ENCODE measurements at regions of chr1 and their contacts with region 1.

Region 1: DNA sequence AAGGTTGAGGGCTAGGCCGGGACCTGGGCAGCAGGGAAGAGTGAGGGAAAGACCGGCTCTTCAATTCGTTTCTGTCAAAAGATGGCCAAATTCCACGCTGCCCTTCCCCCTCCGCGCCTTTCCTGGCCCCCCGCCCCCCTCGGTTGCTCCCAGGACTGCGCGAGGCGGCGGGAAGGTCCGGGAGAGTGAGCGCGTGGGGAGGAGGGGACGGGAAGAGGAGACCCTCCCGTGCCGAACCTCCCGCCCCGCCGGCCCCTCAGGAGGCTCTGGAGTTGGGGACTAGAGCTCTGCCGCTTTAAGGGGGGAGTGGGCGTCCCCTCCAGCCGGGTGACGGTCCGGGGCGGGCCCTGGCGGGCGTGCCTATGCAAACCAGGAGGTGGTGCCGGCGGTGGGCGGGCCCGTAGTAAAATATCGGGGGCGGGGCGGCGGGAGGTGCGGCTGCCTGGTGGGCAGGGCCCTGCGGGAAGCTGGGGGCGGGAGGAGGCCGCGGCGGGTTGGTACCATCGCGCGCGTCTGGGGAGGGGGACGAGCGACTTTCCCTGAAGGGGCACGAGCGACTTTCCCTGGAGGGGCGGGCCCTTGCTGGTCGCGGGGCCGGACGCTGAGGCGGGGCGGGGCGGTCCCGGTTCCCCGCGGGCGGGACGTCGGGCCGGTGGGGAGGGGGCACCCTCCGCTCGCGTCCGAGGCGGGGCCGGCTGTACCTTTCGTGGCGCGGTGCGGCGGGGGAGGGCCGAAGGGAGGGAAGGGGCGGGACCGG is 58.2 kb downstream of the BCL9 start:
- DNase-seq: peak; percentile 94
- H3K4me3 ChIP-seq: peak overlapping the region; percentile 74
- H3K27ac ChIP-seq: peak overlapping the region; percentile 25
- H3K4me1 ChIP-seq: peaks cover 23% of the 10 kb centered on the region
- CTCF ChIP-seq: no peak

Region 2: GRCh38 chr1:147302273-147302672 is 297.3 kb before region 1 on chr1:
- CTCF ChIA-PET with region 1: no interaction called
- POLR2A ChIA-PET with region 1: no interaction called
- intact Hi-C with region 1: no loop called
- DNase-seq: no peak
- H3K4me3 ChIP-seq: no peak overlapping the region
- H3K27ac ChIP-seq: no peak overlapping the region
- H3K4me1 ChIP-seq: no peaks in the 10 kb centered on the region
- CTCF ChIP-seq: no peak

Region 3: DNA sequence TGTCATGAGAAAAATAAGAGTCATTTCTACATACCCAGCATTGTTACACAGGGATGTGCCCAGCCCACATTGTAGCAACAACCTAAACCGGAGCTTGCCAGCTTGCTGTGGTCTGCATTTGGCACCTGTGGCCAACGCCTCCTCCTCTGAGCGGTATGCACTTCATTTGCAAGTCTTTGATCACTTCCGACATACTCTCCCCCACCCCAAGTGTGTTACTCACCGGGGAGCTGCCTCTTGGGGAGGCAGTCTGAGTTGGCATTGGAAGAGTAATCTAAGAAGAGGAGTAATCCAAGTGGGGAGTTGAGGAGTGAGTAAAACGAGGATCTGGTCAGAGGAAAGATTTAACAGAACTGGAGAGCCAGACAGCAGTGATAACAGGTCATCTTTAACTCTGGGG is 54.4 kb before region 1 on chr1:
- CTCF ChIA-PET with region 1: no interaction called
- POLR2A ChIA-PET with region 1: interaction called, 17 read pairs
- intact Hi-C with region 1: loop called (anchors 1 kb)
- DNase-seq: peak; percentile 90
- H3K4me3 ChIP-seq: peak overlapping the region; percentile 39
- H3K27ac ChIP-seq: peak overlapping the region; percentile 40
- H3K4me1 ChIP-seq: peaks cover 53% of the 10 kb centered on the region
- CTCF ChIP-seq: no peak

Region 4: DNA sequence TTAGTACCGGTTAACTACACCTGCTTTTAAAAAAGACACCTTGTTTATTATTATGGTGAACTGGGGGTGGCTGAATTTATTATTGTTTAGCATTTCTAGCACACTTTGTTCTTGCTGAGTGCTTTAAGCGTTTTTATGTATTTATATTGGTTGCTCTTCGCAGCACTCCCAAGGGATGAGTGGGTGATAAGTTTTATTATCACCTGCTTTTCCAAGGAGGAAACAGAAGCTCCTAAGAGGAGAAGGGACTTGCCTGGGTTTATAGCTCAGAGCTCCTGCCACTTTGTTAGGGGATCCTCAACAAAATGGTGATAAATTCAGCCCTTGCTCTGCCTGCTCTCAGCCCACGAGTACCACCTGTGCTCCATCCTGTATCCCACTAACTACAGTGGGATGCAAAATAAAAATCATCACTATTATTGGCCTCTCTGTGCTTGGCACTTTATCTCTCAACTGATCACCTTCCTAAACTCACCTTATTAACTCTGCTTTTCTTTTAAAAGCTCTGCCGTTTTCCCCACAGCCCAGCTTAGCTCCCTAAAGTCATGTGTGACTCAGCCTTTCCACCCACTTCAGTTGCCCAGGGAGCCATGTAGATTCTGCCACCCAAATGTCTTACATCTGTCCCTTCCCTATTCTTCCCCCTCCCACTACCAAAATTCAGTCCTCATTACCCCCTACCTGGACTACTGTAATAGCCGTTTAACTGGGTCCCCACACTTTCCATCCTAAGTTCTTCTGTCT is 13.7 kb before region 1 on chr1:
- CTCF ChIA-PET with region 1: no interaction called
- POLR2A ChIA-PET with region 1: no interaction called
- intact Hi-C with region 1: no loop called
- DNase-seq: no peak
- H3K4me3 ChIP-seq: no peak overlapping the region
- H3K27ac ChIP-seq: no peak overlapping the region
- H3K4me1 ChIP-seq: peaks cover 5% of the 10 kb centered on the region
- CTCF ChIP-seq: no peak

Region 5: DNA sequence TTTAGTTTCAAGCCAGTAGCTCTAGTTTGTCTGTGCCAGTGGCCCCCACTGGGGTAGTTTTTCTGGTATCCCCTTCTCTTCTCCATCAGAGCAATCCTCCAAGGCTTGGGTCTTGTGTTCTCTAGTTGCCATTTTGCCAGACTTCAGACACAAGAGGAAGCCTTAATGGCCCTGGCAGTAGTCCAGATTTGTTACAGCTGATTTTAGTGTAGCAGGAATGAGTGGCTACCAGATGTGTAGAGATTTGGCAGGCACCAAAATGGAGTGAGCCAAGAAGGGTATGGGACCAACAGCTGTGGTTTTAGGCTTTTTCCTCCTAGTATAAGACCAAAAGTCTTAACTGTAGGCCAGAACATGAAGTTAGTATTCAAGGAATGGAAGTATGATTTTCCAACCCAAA is 14.0 kb after region 1 on chr1:
- CTCF ChIA-PET with region 1: no interaction called
- POLR2A ChIA-PET with region 1: no interaction called
- intact Hi-C with region 1: no loop called
- DNase-seq: no peak
- H3K4me3 ChIP-seq: no peak overlapping the region
- H3K27ac ChIP-seq: no peak overlapping the region
- H3K4me1 ChIP-seq: peaks cover 12% of the 10 kb centered on the region
- CTCF ChIP-seq: no peak

Region 6: DNA sequence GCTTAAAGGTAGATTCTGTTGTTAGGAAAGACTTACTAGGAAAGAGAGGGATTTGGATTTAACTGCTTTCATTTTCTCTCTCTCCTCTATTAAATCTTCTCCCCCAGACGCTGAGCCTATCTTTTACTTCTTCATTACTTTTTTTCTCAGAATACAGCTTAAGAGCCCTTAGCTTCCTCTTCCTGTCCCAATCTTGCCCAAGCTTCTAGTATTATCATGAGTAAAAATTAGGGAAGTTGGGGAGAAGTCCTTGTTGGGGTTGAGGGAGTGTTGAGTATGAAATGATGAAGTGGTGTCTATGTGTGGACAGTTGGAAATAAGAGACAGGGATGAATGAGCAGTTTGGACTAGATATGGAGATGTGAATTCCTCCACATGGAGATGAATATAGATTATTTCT is 35.8 kb after region 1 on chr1:
- CTCF ChIA-PET with region 1: no interaction called
- POLR2A ChIA-PET with region 1: no interaction called
- intact Hi-C with region 1: no loop called
- DNase-seq: no peak
- H3K4me3 ChIP-seq: no peak overlapping the region
- H3K27ac ChIP-seq: no peak overlapping the region
- H3K4me1 ChIP-seq: no peaks in the 10 kb centered on the region
- CTCF ChIP-seq: no peak

Measured in OCI-LY7 (cell line).